Activated naive CD4-positive, alpha-beta T cell treated with anti-CD3 and anti-CD28 coated beads for 36 hours (primary cell): ENCODE measurements at regions of chr5 and their contacts with region 1.

Region 1: DNA sequence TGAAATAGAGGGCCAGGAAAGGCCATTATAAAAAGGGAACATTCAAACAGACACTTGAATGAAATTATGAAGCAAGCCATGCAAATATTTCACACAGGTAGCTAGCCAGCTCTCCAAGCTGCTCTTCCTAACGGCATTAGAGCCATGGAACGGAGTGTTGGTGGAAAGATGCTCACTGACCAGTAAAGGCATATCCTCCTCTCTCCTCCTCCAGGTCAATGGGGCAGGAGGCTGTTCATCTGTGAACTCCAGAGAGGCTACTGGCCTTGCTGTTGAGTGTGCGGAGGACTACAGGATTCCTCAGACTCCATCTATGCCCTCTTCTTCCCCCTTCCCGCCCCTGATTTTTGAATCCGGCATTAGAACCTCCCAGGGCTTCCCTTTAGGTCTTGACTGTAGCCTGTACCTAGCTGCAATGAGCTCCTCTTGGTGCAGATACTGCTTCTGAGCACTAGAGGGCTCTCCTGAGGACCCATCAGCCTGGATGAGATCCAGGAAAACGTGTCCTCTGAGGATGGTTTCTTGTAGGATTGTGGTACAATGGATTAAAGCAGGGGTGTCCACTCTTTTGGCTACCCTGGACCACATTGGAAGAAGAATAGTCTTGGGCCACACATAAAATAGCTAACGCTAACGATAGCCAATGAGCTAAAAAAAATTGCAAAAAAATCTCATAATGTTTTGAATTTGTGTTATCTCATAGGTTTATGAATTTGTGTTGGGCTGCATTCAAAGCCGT is 162.2 kb downstream of the SREK1 start:
- DNase-seq: peak; percentile 52
- H3K4me3 Mint-ChIP-seq: no peak overlapping the region
- H3K27ac Mint-ChIP-seq: no peak overlapping the region
- H3K4me1 Mint-ChIP-seq: no peaks in the 10 kb centered on the region
- H3K27me3 Mint-ChIP-seq: peaks cover 8% of the 10 kb centered on the region

Region 2: DNA sequence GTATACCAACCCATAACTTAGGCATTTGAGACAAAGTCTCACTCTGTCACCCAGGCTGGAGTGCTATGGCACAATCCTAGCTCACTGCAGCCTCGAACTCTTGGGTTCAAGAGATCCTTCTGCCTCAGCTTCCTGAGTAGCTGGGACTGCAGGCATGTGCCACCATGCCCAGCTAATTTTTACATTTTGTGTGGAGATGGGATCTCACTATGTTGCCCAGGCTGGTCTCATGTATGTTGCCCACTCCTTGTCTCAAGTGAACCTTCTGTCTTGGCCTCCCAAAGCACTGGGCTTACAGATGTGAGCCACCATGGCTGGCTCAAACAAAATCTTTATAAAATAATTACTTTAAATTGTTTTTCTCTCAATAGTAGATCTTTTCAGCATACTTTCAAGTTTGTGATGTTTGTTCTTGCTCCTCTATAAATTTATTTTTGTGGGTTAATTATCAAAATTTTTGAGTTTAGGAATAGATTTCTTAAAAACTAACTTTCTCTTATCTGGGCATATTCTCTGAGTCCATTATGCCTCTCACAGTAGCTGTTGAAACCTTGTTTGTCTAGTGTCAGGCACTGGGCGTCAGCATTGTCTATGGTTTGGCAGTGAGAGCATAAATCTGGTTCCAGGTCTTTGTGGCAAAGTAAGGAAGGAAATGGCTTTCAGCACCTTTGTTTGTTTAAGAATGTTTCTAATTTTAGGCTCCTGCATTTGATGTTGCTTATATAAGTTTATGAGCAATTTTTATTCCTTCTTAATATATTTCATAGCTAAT is 545.6 kb before region 1 on chr5:
- CTCF ChIA-PET with region 1: interaction called, 3 read pairs
- intact Hi-C with region 1: loop called (anchors 2 kb)
- DNase-seq: peak; percentile 69
- H3K4me3 Mint-ChIP-seq: no peak overlapping the region
- H3K27ac Mint-ChIP-seq: no peak overlapping the region
- H3K4me1 Mint-ChIP-seq: peaks cover 3% of the 10 kb centered on the region
- H3K27me3 Mint-ChIP-seq: no peaks in the 10 kb centered on the region

Region 3: DNA sequence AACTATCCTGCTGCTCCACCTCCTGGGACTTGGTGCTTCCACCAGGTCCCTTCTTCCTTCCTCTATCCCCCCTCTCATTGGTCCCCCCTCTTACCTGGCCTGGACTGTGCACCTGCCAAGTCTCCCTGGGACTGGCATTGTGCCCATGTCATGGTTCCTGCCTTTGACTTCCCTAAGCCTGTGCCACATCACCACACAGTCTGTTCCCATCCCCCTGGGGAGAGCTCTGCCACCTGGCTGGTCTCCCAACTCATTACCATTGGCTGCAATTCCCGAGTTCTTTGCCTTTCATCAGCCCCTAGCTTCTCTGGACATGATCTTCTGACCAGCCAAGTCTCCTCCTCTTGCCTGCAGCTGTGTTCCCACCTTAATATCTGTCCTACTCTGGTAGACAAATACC is 18.1 kb after region 1 on chr5:
- CTCF ChIA-PET with region 1: interaction called, 48 read pairs
- intact Hi-C with region 1: no loop called
- DNase-seq: no peak
- H3K4me3 Mint-ChIP-seq: no peak overlapping the region
- H3K27ac Mint-ChIP-seq: no peak overlapping the region
- H3K4me1 Mint-ChIP-seq: peaks cover 10% of the 10 kb centered on the region
- H3K27me3 Mint-ChIP-seq: no peaks in the 10 kb centered on the region

Region 4: DNA sequence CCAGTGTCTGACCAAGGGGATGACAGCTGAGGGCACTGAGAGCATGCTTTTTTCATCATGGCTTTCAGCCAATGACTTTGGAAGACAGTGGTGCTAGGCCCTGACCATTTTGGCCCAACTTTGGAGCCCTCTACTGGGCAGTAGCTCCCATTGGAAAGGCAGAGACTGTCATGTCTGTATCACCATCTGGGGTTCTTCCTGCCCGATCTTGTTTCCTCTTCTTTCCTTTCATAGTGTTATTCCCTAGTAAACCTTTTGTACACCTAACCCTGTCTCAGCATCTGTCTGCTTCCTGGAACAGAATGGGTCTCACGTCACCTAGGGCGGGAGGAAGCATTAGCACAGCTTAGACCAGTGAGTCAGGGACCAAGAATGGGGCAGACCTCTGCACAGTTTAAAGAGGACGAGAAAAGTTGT is 192.5 kb after region 1 on chr5:
- CTCF ChIA-PET with region 1: interaction called, 19 read pairs
- intact Hi-C with region 1: loop called (anchors 1 kb)
- DNase-seq: peak; percentile 25
- H3K4me3 Mint-ChIP-seq: no peak overlapping the region
- H3K27ac Mint-ChIP-seq: no peak overlapping the region
- H3K4me1 Mint-ChIP-seq: no peaks in the 10 kb centered on the region
- H3K27me3 Mint-ChIP-seq: peaks cover 12% of the 10 kb centered on the region

Region 5: GRCh38 chr5:66764982-66765381 is 458.7 kb after region 1 on chr5:
- CTCF ChIA-PET with region 1: interaction called, 73 read pairs
- intact Hi-C with region 1: no loop called
- DNase-seq: no peak
- H3K4me3 Mint-ChIP-seq: no peak overlapping the region
- H3K27ac Mint-ChIP-seq: no peak overlapping the region
- H3K4me1 Mint-ChIP-seq: no peaks in the 10 kb centered on the region
- H3K27me3 Mint-ChIP-seq: peaks cover 1% of the 10 kb centered on the region

Region 6: DNA sequence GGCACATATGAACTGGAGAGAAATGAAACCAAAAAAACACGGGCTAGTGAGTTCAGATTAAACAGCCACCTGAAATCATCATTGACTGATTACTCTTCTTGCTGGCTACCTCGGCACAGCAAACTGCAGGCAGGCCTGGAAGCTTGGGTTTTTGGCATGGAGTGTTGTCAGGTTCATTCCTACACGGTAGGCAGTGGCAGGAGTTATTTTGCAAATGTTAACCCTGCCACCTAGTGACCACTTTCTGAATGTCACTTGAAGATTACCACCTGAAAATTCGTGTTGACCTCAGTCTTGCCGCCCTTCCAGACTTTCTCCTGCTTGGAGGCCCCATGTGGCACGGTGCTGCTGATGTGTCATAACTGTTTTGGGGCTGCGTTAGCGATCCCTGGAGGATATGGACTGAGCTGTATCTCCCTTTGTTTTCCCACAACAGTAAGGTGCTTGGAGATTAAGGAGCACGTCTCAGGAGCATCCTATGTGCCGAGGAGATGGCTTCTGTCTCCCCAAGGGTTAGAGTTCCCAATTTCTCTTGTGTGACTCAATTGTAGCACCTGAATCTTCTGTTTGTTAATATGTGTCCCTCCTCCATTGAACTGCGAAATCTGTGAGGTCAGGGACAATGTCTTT is 903.0 kb after region 1 on chr5:
- CTCF ChIA-PET with region 1: interaction called, 3 read pairs
- intact Hi-C with region 1: loop called (anchors 1 kb)
- DNase-seq: peak; percentile 79
- H3K4me3 Mint-ChIP-seq: no peak overlapping the region
- H3K27ac Mint-ChIP-seq: peak overlapping the region; percentile 50
- H3K4me1 Mint-ChIP-seq: peaks cover 56% of the 10 kb centered on the region
- H3K27me3 Mint-ChIP-seq: no peaks in the 10 kb centered on the region